BJ (cell line): ENCODE measurements at regions of chr21 and their contacts with region 1.

Region 1: GRCh38 chr21:37675202-37675801 is 241.0 kb downstream of the KCNJ6 start:
- DNase-seq: no peak
- H3K4me3 ChIP-seq: no peak overlapping the region
- H3K27me3 ChIP-seq: peaks cover 11% of the 10 kb centered on the region
- CTCF ChIP-seq: peak; percentile 94

Region 2: GRCh38 chr21:37647781-37648180 is 27.5 kb before region 1 on chr21:
- CTCF ChIA-PET with region 1: interaction called, 16 read pairs
- POLR2A ChIA-PET with region 1: no interaction called
- DNase-seq: no peak
- H3K4me3 ChIP-seq: no peak overlapping the region
- H3K27me3 ChIP-seq: peaks cover 6% of the 10 kb centered on the region; the same call in 1 of the 2 replicates
- CTCF ChIP-seq: no peak

Region 3: DNA sequence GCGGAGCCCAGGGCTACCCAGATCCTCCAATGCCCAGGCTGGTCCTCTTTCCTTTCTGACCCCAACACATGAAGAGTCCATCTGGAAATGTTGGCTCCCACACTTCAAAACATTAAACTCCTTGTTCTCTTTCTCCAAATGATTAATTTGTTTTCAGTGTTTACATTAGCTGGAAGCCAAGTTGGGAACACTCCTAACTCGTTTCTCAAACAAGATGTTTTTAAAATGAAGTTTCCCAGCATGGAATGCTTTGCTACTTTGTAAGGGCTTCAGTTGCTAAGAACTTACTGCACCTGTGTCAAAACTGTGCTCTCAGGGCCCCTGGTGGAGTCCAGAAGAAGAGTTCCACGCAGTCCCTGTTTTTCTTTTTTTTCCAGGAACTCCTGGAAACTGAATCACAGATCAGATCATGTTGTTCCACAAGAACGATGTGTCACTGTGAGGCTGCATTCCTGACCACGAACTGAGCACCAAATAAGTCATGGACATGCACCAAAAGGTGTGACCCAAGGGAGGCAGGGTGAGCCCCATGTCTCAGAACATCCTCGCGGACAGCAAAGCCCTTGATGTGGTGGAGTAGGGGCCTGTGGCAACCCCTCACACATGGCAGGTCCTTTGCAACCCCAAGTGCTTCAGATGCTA is 16.4 kb before region 1 on chr21:
- CTCF ChIA-PET with region 1: interaction called, 12 read pairs
- POLR2A ChIA-PET with region 1: no interaction called
- DNase-seq: peak; percentile 74
- H3K4me3 ChIP-seq: no peak overlapping the region
- H3K27me3 ChIP-seq: peaks cover 6% of the 10 kb centered on the region; the same call in 1 of the 2 replicates
- CTCF ChIP-seq: peak; percentile 68

Region 4: GRCh38 chr21:37695111-37695510 is 19.8 kb after region 1 on chr21:
- CTCF ChIA-PET with region 1: interaction called, 15 read pairs
- POLR2A ChIA-PET with region 1: no interaction called
- DNase-seq: no peak
- H3K4me3 ChIP-seq: no peak overlapping the region
- H3K27me3 ChIP-seq: peaks cover 5% of the 10 kb centered on the region
- CTCF ChIP-seq: no peak

Region 5: GRCh38 chr21:37835481-37835880 is 160.2 kb after region 1 on chr21:
- CTCF ChIA-PET with region 1: no interaction called
- POLR2A ChIA-PET with region 1: no interaction called
- DNase-seq: no peak
- H3K4me3 ChIP-seq: no peak overlapping the region
- H3K27me3 ChIP-seq: no peaks in the 10 kb centered on the region
- CTCF ChIP-seq: no peak